Esophagus muscularis mucosa (tissue), 4 donors: ENCODE measurements at regions of chr6 and their contacts with region 1.

Region 1: DNA sequence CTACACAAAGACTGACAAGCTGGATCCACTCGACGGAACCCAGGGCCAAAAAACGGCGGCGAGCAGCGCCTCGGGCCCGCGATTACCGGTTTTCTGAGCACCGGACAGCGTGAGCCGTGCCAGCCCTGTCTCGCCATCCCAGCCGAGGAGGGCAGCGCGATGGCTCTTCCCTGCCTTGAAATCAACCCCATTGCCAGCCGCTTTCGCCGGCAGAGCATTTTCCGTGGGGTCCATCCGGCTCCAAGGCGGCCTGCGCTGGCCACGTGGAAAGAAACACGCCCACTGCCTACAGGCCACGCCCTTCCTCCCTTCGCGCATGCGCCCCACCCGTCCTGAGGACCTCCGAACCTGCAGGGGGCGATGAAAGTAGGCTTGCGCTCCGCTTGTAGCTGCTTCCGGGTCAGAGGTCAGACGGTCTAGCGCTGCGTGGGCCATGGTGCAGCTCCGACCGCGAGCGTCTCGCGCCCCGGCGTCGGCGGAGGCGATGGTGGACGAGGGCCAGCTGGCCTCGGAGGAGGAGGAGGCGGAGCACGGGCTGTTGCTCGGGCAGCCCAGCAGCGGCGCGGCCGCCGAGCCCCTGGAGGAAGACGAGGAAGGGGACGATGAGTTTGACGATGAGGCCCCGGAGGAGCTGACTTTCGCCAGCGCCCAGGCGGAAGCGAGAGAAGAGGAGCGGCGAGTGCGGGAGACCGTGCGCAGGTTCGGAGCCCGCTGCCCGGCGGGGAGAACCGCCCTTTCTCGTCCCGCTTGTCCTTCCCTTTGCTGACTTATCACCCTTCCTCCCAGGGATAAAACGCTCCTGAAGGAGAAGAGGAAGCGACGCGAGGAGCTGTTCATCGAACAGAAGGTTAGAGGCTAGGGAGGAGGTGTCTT is at the start of gene NOL7:
- DNase-seq: peak; percentile 99
- H3K4me3 ChIP-seq: peak within 1 kb of the TSS; percentile 73 to 94 (median 85)
- H3K27ac ChIP-seq: peak within 1 kb of the TSS; percentile 84 to 93 (median 90)
- H3K4me1 ChIP-seq: peaks cover 17 to 27% (median 25%) of the 10 kb centered on the region in 4 donors
- H3K27me3 ChIP-seq: no peaks in the 10 kb centered on the region
- CTCF ChIP-seq: peak; percentile 91 to 92 (median 92)
- EP300 ChIP-seq: no peak
- POLR2A ChIP-seq: peak; percentile 37
- total RNA-seq, gene NOL7: 67.3 to 97.2 (median 74.8) TPM

Region 2: GRCh38 chr6:13574571-13575376 is 40.4 kb before region 1 on chr6 and contains the start of gene SIRT5:
- intact Hi-C with region 1: loop called (anchors 5 kb)
- DNase-seq: peak; percentile 95
- H3K4me3 ChIP-seq: peak within 1 kb of the TSS; percentile 74 to 96 (median 86)
- H3K27ac ChIP-seq: peak within 1 kb of the TSS; percentile 92 to 99 (median 97)
- H3K4me1 ChIP-seq: peaks cover 13 to 25% (median 17%) of the 10 kb centered on the region in 4 donors
- H3K27me3 ChIP-seq: no peaks in the 10 kb centered on the region
- CTCF ChIP-seq: no peak
- EP300 ChIP-seq: no peak
- POLR2A ChIP-seq: peak; percentile 78
- total RNA-seq, gene SIRT5: 7.8 to 14.5 (median 12.6) TPM

Region 3: GRCh38 chr6:13767121-13767808 is 152.1 kb after region 1 on chr6:
- intact Hi-C with region 1: loop called (anchors 1 kb)
- DNase-seq: no peak
- H3K4me3 ChIP-seq: peak overlapping the region; percentile 41 to 60 (median 46)
- H3K27ac ChIP-seq: peak overlapping the region; percentile 30 to 69 (median 58)
- H3K4me1 ChIP-seq: peaks cover 19 to 38% (median 30%) of the 10 kb centered on the region in 4 donors
- H3K27me3 ChIP-seq: no peaks in the 10 kb centered on the region
- CTCF ChIP-seq: peak in 2 of 3 experiments; percentile 25 to 58
- EP300 ChIP-seq: peak; percentile 52
- POLR2A ChIP-seq: no peak